ENCODE measurements at regions of chr1 and their contacts with region 1.

Region 1: DNA sequence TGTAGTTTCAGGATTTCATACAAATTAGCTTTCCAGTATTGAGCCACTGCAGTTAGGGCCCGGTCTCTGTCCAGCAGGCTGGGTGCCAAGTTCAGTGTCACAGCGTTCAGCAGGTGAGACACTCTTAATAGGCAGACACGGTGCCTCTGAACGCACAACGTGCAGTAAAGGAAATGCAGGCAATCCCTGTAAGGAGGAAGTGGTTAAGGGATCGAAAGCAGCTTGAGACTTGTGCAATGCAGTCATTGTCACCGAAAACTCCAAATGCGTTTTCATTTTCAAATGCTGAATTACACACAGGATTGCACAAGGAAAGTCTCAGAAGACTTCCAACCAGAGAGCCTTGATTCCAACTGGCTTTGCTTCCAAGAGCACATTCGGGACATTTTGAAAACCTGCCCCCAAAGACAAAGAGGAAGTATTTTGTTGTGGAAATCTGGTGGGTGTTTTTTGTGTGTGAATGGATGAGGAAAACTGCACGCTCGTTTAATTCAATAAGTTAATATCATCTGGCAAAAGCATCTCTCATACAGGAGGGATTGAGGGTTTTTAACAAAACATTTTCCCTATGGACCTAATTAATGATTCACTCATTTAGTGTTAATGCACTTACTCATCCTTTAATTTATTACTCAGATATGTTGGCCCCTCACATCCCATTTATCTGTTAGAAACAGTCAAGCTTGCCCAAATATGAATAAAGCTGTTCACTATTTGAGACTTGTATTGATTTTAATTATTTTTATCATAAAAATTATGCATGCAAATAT is 61.6 kb downstream of the PTGS2 start:
- DNase-seq: peak; percentile 77 to 94 (median 91)
- H3K4me3 ChIP-seq: peak overlapping the region in 6 of 7 experiments; percentile 37 to 83 (median 66)
- H3K27ac ChIP-seq: peak overlapping the region; percentile 11 to 36
- H3K4me1 ChIP-seq: peaks cover 17 to 41% (median 28%) of the 10 kb centered on the region in 4 experiments
- H3K27me3 ChIP-seq: no peaks in the 10 kb centered on the region

Region 2: GRCh38 chr1:186643600-186643999 is 25.0 kb after region 1 on chr1:
- CTCF ChIA-PET with region 1: no interaction called
- POLR2A ChIA-PET with region 1: no interaction called
- DNase-seq: no peak
- H3K4me3 ChIP-seq: no peak overlapping the region
- H3K27ac ChIP-seq: no peak overlapping the region
- H3K4me1 ChIP-seq: no peaks in the 10 kb centered on the region
- H3K27me3 ChIP-seq: no peaks in the 10 kb centered on the region

Region 3: GRCh38 chr1:186680245-186681061 is 61.9 kb after region 1 on chr1 and contains the start of gene PTGS2:
- CTCF ChIA-PET with region 1: interaction called, 44 read pairs
- POLR2A ChIA-PET with region 1: interaction called, 3 read pairs
- DNase-seq: peak; percentile 94 to 98 (median 97)
- H3K4me3 ChIP-seq: peak within 1 kb of the TSS; percentile 85 to 98 (median 88)
- H3K27ac ChIP-seq: peak within 1 kb of the TSS; percentile 90 to 94
- H3K4me1 ChIP-seq: peaks cover 5 to 36% (median 14%) of the 10 kb centered on the region in 4 experiments
- H3K27me3 ChIP-seq: no peaks in the 10 kb centered on the region